ENCODE measurements at regions of chr2 and their contacts with region 1.

Region 1: DNA sequence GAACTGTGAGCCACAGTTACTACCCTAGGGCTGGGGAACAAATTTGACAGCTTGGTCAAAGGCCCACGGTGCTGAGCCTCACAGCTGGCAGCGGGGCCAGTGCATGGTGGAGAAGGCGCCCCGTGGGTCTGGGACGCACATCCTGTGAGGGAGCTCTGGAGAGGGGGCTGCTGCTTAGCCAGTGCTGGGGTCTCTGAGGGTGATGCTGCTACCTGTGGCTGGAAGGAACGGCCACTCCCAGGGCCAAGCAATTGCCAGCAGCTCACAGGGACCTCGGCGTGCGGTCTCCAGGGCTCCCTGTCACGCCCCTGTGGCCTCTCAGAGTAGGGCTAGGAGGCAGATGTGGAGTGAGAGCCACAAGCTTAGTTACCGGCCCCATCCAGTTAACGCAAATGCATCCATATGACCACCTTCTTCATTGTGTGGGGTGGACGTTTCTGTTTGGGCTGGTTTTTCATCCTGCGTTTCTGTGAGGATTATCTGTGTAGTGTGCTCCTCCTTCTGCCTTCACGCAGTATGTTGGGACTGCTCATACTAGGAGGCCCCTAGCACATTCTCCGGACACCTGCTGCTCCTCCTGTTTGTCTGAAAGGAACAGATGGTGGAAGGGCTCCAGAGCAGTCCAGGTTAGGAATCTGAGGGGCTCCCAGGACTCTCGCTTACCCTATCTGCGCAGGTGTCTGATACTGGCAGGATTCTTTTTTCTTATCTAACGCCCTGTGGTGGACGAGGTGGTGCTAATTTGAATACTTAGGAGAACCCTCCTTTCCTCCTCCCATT is 26.0 kb downstream of the STK25 start:
- DNase-seq: no peak
- H3K4me3 ChIP-seq: no peak overlapping the region
- H3K27ac ChIP-seq: no peak overlapping the region
- H3K4me1 ChIP-seq: no peaks in the 10 kb centered on the region
- H3K27me3 ChIP-seq: no peaks in the 10 kb centered on the region
- CTCF ChIP-seq: no peak

Region 2: GRCh38 chr2:241441492-241441891 is 40.9 kb before region 1 on chr2:
- CTCF ChIA-PET with region 1: no interaction called
- POLR2A ChIA-PET with region 1: interaction called, 13 read pairs
- intact Hi-C with region 1: no loop called
- DNase-seq: no peak
- H3K4me3 ChIP-seq: no peak overlapping the region
- H3K27ac ChIP-seq: no peak overlapping the region
- H3K4me1 ChIP-seq: no peaks in the 10 kb centered on the region
- H3K27me3 ChIP-seq: no peaks in the 10 kb centered on the region
- CTCF ChIP-seq: no peak